A673 (cell line): ENCODE measurements at regions of chr6 and their contacts with region 1.

Region 1: GRCh38 chr6:36556281-36556680 is 9.0 kb upstream of the STK38 start:
- DNase-seq: no peak
- H3K4me3 ChIP-seq: no peak overlapping the region
- H3K27ac ChIP-seq: no peak overlapping the region
- H3K4me1 ChIP-seq: no peaks in the 10 kb centered on the region
- H3K27me3 ChIP-seq: no peaks in the 10 kb centered on the region
- CTCF ChIP-seq: no peak

Region 2: GRCh38 chr6:35280903-35281302 is 1275.4 kb before region 1 on chr6:
- CTCF ChIA-PET with region 1: no interaction called
- POLR2A ChIA-PET with region 1: no interaction called
- intact Hi-C with region 1: no loop called
- DNase-seq: no peak
- H3K4me3 ChIP-seq: no peak overlapping the region
- H3K27ac ChIP-seq: no peak overlapping the region
- H3K4me1 ChIP-seq: no peaks in the 10 kb centered on the region
- H3K27me3 ChIP-seq: no peaks in the 10 kb centered on the region
- CTCF ChIP-seq: no peak

Region 3: GRCh38 chr6:36576561-36576960 is 20.3 kb after region 1 on chr6:
- CTCF ChIA-PET with region 1: no interaction called
- POLR2A ChIA-PET with region 1: interaction called, 16 read pairs
- intact Hi-C with region 1: no loop called
- DNase-seq: no peak
- H3K4me3 ChIP-seq: no peak overlapping the region
- H3K27ac ChIP-seq: no peak overlapping the region
- H3K4me1 ChIP-seq: no peaks in the 10 kb centered on the region
- H3K27me3 ChIP-seq: no peaks in the 10 kb centered on the region
- CTCF ChIP-seq: no peak